ENCODE measurements at regions of chr17 and their contacts with region 1.

Region 1: GRCh38 chr17:55988861-55989260 is 164.4 kb upstream of the ANKFN1 start:
- DNase-seq: no peak
- H3K4me3 Mint-ChIP-seq: no peak overlapping the region
- H3K27ac Mint-ChIP-seq: no peak overlapping the region
- H3K4me1 Mint-ChIP-seq: no peaks in the 10 kb centered on the region
- H3K27me3 Mint-ChIP-seq: no peaks in the 10 kb centered on the region

Region 2: GRCh38 chr17:55962951-55963401 is 25.9 kb before region 1 on chr17:
- intact Hi-C with region 1: loop called (anchors 1 kb)
- DNase-seq: no peak
- H3K4me3 Mint-ChIP-seq: no peak overlapping the region
- H3K27ac Mint-ChIP-seq: no peak overlapping the region
- H3K4me1 Mint-ChIP-seq: no peaks in the 10 kb centered on the region
- H3K27me3 Mint-ChIP-seq: peaks cover 1% of the 10 kb centered on the region

Measured in activated T-helper 1 cell treated with anti-CD3 and anti-CD28 coated beads, Interleukin-12 subunit alpha, Interleukin-12 subunit beta, Interleukin-2, Interleukin-4 antibody, amounts not matched to agents 30 ng/mL and 10 ng/mL and 1 ng/mL, durations not matched to agents 14 hours and 24 hours and 36 hours (primary cell).